GM13976 (cell line): ENCODE measurements at regions of chr9 and their contacts with region 1.

Region 1: DNA sequence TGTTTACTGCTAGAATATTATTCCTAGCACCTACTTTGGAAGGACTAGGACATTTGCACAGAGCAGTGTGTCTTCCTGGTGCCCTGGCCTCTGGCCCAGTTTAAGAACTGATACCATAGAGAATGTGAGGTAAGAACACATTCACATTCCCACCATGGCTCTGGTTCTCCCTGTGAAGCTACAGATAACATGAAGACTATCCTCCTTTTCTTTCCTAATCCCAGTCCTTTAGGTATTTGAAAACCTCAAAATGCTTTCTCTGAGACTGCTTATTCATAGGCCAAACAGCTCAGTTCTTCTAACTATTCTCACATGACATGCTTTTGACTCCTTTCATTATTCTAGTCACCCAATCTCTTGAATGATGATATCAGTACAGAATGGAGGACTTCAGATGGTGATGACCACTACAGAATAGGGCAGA is 11.9 kb downstream of the FAM219A start:
- DNase-seq: no peak
- CTCF ChIP-seq: no peak

Region 2: DNA sequence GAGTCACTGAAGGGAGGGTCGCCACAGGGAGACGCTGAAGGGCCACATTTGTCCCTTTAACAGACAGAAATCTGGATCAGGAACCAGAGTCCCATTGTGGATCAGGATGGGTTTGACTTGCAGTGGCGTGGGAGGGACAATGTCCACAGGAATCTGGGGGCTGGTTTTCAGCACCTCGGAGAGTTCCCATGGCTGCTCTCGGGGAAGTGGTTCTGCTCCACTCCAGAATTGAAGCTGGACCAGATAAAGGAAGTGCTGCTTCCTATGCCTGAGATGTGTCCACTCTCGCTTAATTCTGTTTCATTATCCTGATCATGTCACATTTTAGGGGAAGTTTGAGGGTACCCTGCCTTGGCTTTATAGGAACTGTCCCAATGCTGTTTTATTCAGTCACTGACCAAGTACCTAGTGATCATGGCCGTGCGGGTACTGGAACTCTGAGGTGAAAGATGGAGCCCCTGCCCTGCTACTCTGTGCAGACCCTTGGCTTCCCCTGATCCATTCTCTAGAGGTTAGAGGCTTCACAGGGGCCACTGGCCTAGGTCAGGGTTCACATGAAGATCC is 47.6 kb after region 1 on chr9:
- in situ Hi-C with region 1: loop called (anchors 10 kb)
- DNase-seq: no peak
- CTCF ChIP-seq: no peak

Region 3: DNA sequence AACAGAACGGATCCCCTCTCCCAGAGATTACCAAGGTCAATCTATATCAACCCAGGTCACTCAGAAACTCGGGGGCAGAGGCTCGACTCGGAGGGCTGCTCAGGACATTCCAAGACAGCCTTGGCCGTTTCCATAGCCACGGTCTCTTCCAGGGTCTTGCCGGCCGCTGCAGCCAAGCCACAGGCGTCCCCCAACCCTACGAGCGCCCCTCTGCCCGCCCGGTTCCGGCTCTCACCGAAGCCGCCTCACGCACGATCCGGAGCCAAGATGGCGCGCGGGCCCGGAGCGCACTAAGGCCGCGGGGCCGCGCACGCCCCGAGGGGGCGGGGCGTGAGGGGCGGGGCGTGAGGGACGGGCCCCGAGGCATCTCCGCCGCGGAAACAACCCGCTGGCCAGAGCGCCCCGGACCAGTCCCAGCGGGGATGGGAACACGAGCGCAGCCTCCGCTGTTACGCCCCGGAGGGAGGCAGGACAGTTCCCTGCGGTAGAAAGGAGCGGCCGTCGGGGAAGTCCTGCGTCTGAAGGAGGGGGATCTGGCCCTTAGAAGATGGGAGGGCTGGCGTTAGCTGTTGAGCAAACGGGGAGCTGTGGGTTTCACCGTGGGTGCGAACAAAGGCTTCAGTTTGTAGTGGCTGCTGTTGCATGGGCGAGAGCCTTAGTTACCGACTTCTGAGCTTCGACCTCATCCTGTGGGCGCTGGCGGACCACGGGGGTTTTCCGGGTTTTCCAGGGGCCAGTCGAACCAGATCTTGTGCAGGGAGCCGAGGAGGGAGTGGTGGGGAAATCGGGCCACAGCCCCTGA is 165.6 kb after region 1 on chr9 and contains the start of gene RPP25L:
- in situ Hi-C with region 1: no loop called
- DNase-seq: peak; percentile 97
- CTCF ChIP-seq: no peak